Ovary (tissue), 10 donors: ENCODE measurements at regions of chr19 and their contacts with region 1.

Region 1: GRCh38 chr19:9621156-9622037 is at the start of gene ZNF561:
- DNase-seq: peak; percentile 83 to 91 (median 87)
- H3K4me3 ChIP-seq: peak within 1 kb of the TSS; percentile 81
- H3K27ac ChIP-seq: peak within 1 kb of the TSS; percentile 69 to 79
- H3K4me1 ChIP-seq: peaks cover 7% of the 10 kb centered on the region
- H3K27me3 ChIP-seq: no peaks in the 10 kb centered on the region
- CTCF ChIP-seq: peak in 1 of 3 donors; percentile 3
- EP300 ChIP-seq: no peak
- POLR2A ChIP-seq: no peak
- total RNA-seq, gene ZNF561: 30.9 to 48.3 (median 39.5) TPM

Region 2: DNA sequence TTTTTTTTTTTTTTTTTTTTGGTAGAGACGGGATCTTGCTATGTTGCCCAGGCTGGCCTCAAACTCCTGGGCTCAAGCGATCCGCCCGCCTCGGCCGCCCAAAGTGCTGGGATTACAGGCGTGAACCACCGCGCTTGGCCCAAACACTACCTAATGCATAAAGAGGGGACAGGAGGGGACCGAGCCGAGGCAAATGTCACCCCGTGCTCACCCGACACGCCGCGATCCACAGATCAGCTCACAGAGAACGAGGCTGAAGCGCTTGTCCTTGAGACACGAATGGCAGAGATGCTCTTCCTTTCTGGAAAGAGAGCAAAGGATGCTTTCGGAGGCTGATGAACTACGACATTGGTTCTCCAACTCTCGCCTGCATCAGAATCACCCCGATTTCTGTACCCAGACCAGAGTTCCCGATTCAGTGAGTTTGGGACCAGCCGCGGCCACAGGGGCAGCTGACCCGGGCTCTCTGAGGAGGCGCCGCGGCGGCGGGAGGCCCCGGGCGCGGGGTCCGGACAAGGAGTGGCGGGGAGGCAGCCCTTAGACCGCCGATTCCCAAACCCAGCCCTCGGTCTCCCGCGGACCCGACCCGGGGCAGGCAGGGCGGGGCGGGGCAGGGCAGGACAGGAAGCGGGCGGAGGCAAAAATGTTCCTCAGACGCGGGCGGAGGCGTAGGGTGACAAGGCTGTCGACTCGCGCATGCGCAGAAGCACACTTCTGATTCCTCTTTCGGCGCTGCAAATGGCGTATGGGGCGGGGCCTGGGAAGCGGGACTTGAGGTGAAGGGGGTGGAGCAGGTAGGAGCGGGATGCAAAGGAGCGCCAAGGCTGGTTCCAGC is 312.0 kb before region 1 on chr19 and contains the start of gene ZNF699:
- intact Hi-C with region 1: loop called in 1 of 4 experiments (anchors 5 kb)
- DNase-seq: peak; percentile 98 to 99 (median 99)
- H3K4me3 ChIP-seq: peak within 1 kb of the TSS; percentile 97
- H3K27ac ChIP-seq: peak within 1 kb of the TSS; percentile 72 to 90
- H3K4me1 ChIP-seq: peaks cover 1% of the 10 kb centered on the region
- H3K27me3 ChIP-seq: no peaks in the 10 kb centered on the region
- CTCF ChIP-seq: no peak
- EP300 ChIP-seq: no peak
- POLR2A ChIP-seq: peak; percentile 47
- total RNA-seq, gene ZNF699: 9.2 to 31.2 (median 14.2) TPM

Region 3: DNA sequence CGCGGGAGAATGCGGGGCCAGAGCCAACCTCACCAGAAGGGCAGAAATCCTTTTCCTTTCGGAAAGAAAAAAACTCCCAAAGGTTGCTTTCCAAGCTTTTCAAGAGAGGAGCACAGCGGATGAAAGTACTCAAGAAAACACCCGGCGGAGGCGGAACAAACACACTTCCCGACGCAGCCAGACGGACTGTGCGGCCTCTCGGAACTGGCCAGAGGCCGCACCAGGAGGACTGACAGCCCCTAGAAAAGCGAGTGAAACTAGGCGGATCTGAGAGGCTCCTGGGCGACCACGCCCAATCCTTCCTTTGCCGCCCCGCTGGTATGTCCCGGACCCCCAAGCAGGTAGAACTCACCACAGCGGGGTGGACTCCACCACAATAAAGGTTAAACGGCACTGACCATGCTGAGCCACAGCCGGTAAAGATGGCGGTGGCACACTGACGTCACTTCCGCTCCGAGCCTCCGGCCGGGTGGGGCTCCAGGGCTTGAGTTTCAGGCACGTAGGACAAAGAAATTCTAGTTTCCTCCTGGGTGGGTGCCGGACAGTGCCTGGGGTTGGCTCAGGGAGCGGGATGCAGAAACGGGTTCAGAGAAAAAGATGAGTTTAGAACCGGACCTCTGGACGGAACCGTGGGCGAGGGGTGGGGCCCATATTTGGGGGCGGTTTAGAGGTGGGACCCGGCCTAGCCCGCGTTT is 53.4 kb after region 1 on chr19 and contains the start of gene ZNF562:
- intact Hi-C with region 1: loop called in 1 of 4 experiments (anchors 10 kb)
- DNase-seq: peak; percentile 84 to 91 (median 88)
- H3K4me3 ChIP-seq: peak within 1 kb of the TSS; percentile 60
- H3K27ac ChIP-seq: peak within 1 kb of the TSS; percentile 88 to 98
- H3K4me1 ChIP-seq: peaks cover 3% of the 10 kb centered on the region
- H3K27me3 ChIP-seq: no peaks in the 10 kb centered on the region
- CTCF ChIP-seq: no peak
- EP300 ChIP-seq: no peak
- POLR2A ChIP-seq: peak; percentile 45
- total RNA-seq, gene ZNF562: 26.0 to 54.6 (median 36.2) TPM

Region 4: DNA sequence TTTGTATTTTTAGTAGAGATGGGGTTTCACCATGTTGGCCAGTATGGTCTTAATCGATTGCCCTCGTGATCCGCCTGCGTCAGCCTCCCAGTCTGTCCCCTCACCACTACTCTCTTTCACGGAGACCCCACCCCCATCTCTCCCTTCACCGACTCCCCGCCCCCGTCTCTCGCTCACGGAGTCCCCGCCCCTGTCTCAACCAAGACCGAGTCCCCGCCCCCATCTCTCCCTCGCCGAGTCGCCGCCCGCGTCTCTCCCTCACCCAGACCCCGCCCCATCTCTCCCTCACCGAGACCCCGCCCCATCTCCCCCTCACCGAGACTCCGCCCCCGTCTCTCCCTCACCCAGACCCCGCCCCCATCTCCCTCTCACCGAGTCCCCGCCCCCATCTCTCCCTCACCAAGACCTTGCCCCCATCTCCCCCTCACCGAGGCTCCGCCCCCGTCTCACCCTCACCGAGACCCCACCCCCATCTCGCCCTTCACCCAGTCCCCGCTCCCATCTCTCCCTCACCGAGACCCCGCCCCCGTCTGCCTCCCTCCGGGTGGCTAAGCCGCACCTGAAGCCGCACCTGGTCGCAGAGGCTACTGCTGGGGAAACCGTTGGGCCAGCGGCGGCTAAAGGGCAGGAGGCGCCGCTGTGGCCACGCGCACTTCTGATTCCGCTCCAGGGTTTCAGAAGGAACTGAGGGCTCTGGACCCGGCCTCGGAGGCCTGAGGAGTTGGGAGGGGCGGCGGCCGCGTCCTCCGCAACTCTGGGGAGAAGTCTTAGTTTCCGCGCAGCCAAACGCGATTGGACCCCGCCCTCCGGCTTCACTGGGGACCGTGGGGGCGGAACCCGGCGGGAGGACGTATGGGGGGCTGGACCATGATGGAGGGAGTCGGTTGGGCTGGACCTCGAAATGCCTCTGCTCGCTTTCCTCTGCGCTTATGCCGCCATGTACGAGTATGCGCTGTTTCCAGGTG is 164.3 kb after region 1 on chr19:
- intact Hi-C with region 1: loop called in 3 of 4 experiments (anchors 5 to 10 kb)
- DNase-seq: peak; percentile 97 to 99 (median 99)
- H3K4me3 ChIP-seq: peak overlapping the region; percentile 81
- H3K27ac ChIP-seq: peak overlapping the region; percentile 77 to 98
- H3K4me1 ChIP-seq: peaks cover 7% of the 10 kb centered on the region
- H3K27me3 ChIP-seq: no peaks in the 10 kb centered on the region
- CTCF ChIP-seq: no peak
- EP300 ChIP-seq: no peak
- POLR2A ChIP-seq: peak; percentile 95

Region 5: DNA sequence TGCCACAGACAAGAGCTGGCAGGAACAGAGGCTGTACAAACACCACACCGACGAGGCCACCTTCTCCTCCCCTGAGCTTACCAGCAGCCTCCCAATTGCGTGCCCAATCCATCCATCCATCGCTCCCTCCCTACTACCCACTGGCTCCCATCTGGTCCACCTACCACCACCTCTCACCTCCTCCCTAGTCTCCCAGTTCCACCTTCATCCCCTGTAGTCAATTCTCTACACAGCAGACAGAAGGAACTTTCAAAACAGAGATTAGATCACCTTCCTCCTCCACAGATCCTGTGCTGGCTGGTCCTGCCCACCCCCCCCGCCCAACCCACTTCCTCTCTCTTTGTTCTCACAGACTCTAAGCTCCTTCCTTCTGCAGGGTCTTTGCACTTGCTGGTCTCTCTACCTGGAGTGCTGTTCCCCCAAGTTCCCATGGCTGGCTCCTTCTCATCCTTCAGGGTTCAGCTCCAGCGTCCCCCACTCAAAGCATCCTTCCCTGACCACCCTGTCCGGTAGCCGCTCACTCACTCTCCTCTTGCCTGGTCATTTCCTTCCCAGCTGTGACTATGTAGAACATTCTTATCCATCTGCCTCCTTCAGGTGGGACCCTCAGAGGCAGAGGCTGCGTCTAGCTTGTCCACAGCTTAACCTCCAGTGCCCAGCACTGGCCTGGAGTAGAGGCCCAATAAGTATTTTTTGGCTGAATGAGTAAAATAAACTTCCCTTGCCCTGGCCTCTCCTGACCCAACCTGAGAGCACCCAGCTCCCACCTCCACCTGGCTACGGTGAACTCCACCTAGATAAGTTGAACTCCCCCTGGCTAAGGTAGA is 236.7 kb after region 1 on chr19:
- intact Hi-C with region 1: no loop called
- DNase-seq: no peak
- H3K4me3 ChIP-seq: no peak overlapping the region
- H3K27ac ChIP-seq: no peak overlapping the region
- H3K4me1 ChIP-seq: no peaks in the 10 kb centered on the region
- H3K27me3 ChIP-seq: no peaks in the 10 kb centered on the region
- CTCF ChIP-seq: no peak
- EP300 ChIP-seq: no peak
- POLR2A ChIP-seq: no peak